Posterior vena cava (tissue), 2 donors: ENCODE measurements at regions of chr10 and their contacts with region 1.

Region 1: DNA sequence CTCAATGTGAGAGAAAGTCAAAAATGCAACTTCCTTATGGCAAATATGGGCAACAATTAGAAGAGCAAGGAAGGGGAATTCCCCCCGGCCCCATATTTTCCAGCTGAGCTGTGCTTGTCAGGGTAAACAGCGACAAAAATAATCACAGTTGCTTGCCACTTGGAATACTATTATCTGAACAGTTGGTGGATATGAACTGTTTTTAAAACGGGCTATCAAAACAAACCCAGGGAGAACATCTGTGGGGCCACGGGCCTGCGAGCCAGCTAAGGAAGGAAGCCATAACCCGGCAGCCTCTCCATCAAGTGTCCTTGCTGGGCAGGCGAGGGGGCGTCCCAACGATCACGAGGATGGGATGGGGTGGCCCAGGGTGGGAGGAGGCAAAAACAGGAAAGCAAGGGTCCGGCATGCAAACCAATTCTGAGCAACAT is 228.4 kb downstream of the ARHGAP12 start:
- DNase-seq: no peak

Region 2: DNA sequence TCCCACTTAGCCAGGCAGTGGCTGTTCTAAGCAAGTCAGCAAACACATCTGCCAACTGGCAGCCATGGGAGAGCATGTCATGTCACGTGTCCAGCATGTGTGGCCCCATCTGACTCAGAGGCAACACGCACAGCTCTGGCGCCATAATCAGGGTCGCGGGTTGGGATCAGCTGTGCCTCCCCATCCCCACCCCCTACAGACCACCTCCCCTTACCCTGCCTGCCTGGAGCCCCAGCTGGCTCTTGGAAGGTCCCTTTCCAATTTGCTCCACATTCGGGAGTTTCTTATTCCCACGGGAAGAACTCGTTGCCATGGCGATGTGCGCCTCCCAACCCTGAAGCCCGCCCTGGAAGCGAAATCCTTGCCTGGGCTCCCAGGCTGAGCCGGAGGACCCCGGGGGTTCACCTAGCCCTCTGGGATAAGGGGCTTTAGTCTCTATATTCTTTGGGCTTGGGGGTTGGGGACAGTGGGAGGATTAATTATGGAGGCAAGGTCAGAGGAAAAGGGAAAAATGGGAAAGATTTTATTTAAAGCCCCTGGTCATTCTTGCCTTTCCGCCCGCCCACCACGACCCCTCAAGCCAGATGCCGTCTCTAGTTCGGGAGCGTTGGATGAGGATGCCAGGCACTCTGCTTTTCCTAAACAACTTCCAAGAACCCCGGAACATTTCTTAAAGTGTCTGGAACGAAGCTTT is 97.5 kb before region 1 on chr10:
- intact Hi-C with region 1: no loop called
- DNase-seq: peak; percentile 96

Region 3: DNA sequence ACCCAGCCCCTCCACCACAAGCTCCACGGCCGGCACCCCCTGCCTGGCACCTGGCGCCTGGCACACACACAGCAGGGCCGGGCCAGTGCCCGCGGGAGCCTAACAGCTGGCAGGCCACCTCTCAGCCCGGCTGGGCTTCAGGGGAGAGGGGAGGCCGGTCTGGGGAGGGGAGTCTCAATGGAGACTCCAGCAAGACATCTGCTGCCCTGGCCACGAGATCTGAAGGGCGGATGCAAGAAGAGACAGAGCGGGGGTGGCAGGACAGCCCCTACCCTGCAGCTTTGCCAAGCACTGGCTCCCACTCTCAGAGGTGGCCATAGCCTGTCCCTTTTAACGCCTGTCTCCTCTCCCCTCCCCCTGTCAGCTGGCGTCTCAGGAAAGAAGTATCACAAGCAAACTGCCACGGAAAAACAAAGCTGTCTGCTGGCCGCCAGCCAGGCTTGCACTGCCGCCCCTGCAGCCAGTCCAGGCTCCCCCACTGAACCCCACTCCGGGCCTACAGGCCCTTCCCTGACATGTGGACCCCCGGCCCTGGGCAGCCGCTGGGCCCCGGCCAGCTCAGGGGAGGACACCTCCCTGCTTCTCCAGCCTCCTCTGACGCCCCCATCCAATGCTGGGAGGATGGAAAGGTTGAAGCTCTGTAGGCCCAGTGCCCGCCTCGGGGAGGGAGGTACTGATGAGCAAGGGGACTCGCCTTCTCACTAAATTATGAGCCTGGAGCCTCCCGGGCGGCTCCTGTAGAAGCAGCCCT is 50.0 kb after region 1 on chr10:
- intact Hi-C with region 1: loop called (anchors 5 to 10 kb)
- DNase-seq: peak; percentile 89